OCI-LY7 (cell line): ENCODE measurements at regions of chr17 and their contacts with region 1.

Region 1: DNA sequence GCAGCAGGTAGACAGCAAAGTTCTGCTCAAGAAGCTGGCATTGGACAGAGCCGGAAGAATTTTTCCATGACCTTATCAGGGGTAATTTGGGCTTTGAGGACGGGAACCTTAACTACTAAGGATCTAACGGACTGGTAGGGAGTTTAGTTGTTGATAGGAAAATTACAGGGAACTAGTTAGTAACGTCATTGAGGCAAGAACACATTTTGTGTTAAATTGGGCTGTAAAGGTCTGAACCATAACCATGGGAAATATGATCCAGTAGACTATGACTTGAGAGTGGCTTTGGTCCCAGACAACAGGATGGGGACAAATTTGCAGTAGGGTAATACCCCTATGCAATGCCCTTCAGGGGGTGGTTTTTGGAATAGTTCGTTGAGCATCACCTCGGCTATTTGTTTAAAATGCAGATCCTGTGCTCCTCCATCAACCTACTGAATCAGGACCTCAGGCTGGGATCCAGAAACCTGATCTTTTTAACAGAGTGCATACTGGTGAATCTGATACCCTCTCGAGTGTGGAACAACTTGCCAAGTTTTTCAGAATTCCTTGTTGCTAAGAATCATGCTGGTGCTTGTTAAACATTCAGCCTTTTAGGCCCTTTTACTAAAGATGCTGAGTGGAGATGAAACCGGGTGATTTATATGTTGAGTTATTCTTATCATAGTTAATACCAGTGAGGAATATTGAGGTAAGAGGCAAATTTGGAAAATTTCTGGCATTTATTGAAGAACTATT is 255.1 kb downstream of the MAP2K6 start:
- DNase-seq: no peak
- H3K4me3 ChIP-seq: no peak overlapping the region
- H3K27ac ChIP-seq: no peak overlapping the region
- H3K4me1 ChIP-seq: no peaks in the 10 kb centered on the region
- CTCF ChIP-seq: no peak

Region 2: DNA sequence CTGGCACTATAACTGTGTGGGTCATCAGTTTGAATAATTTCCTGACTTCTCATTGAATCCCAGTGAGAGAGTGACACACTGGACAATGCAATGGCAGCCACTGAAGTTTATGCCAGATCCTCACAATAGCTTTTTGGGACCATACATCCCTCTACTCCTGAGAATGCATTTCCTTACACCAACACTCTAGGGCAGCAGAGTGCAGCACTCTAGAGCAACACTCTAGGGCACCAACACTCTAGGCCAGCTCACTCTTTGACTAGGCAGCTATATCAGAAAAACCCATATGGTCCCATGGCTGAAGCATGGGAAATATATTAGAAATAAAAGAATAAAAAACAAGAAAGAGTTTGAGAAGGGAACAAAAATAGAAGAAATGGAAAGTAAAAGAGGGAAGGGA is 54.1 kb after region 1 on chr17:
- CTCF ChIA-PET with region 1: no interaction called
- POLR2A ChIA-PET with region 1: no interaction called
- intact Hi-C with region 1: loop called (anchors 2 kb)
- DNase-seq: no peak
- H3K4me3 ChIP-seq: no peak overlapping the region
- H3K27ac ChIP-seq: no peak overlapping the region
- H3K4me1 ChIP-seq: no peaks in the 10 kb centered on the region
- CTCF ChIP-seq: peak; percentile 31; the same call in 1 of the 2 replicates